PC-3 (cell line): ENCODE measurements at regions of chrX and their contacts with region 1.

Region 1: GRCh38 chrX:45801554-45801953 is 600.9 kb upstream of the DIPK2B start:
- DNase-seq: peak; percentile 71
- ATAC-seq: peak; percentile 52
- H3K4me3 ChIP-seq: peak overlapping the region; percentile 58
- H3K27ac ChIP-seq: peak overlapping the region; percentile 98
- H3K4me1 ChIP-seq: peaks cover 65% of the 10 kb centered on the region
- H3K27me3 ChIP-seq: no peaks in the 10 kb centered on the region
- CTCF ChIP-seq: peak; percentile 59

Region 2: GRCh38 chrX:45710081-45710801 is 91.3 kb before region 1 on chrX:
- CTCF ChIA-PET with region 1: no interaction called
- POLR2A ChIA-PET with region 1: no interaction called
- intact Hi-C with region 1: no loop called
- DNase-seq: peak; percentile 96
- ATAC-seq: peak; percentile 68
- H3K4me3 ChIP-seq: no peak overlapping the region
- H3K27ac ChIP-seq: peak overlapping the region; percentile 100
- H3K4me1 ChIP-seq: peaks cover 62% of the 10 kb centered on the region
- H3K27me3 ChIP-seq: no peaks in the 10 kb centered on the region
- CTCF ChIP-seq: no peak

Region 3: GRCh38 chrX:45824471-45824870 is 22.9 kb after region 1 on chrX:
- CTCF ChIA-PET with region 1: interaction called, 3 read pairs
- POLR2A ChIA-PET with region 1: no interaction called
- intact Hi-C with region 1: loop called (anchors 1 kb)
- DNase-seq: peak; percentile 96
- ATAC-seq: peak; percentile 96
- H3K4me3 ChIP-seq: no peak overlapping the region
- H3K27ac ChIP-seq: peak overlapping the region; percentile 71
- H3K4me1 ChIP-seq: peaks cover 33% of the 10 kb centered on the region
- H3K27me3 ChIP-seq: no peaks in the 10 kb centered on the region
- CTCF ChIP-seq: peak; percentile 91